ENCODE measurements at regions of chr15 and their contacts with region 1.

Region 1: GRCh38 chr15:74956648-74957300 is at the start of gene RPP25:
- DNase-seq: peak; percentile 36 to 89
- H3K4me3 ChIP-seq: peak within 1 kb of the TSS; percentile 71 to 84
- H3K27ac ChIP-seq: peak within 1 kb of the TSS; percentile 91 to 94
- H3K4me1 ChIP-seq: peaks cover 7 to 16% of the 10 kb centered on the region in 2 donors
- H3K27me3 ChIP-seq: no peaks in the 10 kb centered on the region
- CTCF ChIP-seq: no peak
- total RNA-seq, gene RPP25: 28.4 TPM

Region 2: DNA sequence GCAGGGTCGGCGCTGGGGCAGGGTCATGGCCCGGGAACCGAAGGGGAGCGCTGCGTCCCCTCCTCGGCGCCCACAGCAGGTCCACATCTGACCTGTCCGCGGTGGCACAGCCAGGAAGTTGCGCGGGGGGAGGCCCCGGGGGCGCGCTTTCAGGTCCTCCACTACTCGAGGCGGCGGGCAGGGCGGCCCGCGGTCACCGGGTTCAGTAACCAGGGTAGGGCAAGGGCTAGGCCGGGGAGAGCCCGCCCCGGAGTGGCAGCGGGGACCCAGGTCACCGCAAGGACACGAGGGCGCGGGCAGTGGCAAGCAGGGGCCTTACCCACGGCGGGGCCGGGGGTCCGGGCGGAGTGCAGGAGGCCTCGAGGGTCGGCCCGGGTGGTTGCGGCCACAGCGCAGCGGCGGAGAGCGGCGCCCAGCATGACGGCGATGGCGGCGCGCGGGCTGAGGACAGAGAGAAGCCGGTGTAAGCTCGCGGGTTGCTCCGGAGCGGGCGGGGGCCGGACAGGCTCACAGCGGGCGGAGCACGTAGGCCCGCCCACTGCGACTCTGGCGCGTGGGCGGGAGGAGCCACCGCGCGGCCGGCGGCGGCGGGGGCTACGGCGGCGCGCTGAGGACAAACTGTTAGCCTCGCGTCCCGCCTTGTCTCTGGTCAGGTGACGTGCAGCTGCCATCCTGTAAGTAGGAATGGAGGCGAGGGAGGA is 19.0 kb before region 1 on chr15 and contains the start of gene COX5A:
- intact Hi-C with region 1: loop called (anchors 1 kb)
- DNase-seq: peak; percentile 87 to 97
- H3K4me3 ChIP-seq: peak within 1 kb of the TSS; percentile 80 to 83
- H3K27ac ChIP-seq: peak within 1 kb of the TSS; percentile 87 to 88
- H3K4me1 ChIP-seq: peaks cover 8 to 24% of the 10 kb centered on the region in 2 donors
- H3K27me3 ChIP-seq: no peaks in the 10 kb centered on the region
- CTCF ChIP-seq: peak in 1 of 3 experiments; percentile 43
- total RNA-seq, gene COX5A: 83.5 TPM

Region 3: GRCh38 chr15:75029378-75030022 is 72.7 kb after region 1 on chr15:
- intact Hi-C with region 1: no loop called
- DNase-seq: peak; percentile 78 to 97
- H3K4me3 ChIP-seq: peak overlapping the region; percentile 10 to 44
- H3K27ac ChIP-seq: peak overlapping the region; percentile 84 to 90
- H3K4me1 ChIP-seq: peaks cover 15 to 25% of the 10 kb centered on the region in 2 donors
- H3K27me3 ChIP-seq: no peaks in the 10 kb centered on the region
- CTCF ChIP-seq: peak; percentile 89 to 95 (median 92)